Activated B cell treated with CpG ODN at 0.5 μM for 24 hours (primary cell): ENCODE measurements at regions of chr1 and their contacts with region 1.

Region 1: DNA sequence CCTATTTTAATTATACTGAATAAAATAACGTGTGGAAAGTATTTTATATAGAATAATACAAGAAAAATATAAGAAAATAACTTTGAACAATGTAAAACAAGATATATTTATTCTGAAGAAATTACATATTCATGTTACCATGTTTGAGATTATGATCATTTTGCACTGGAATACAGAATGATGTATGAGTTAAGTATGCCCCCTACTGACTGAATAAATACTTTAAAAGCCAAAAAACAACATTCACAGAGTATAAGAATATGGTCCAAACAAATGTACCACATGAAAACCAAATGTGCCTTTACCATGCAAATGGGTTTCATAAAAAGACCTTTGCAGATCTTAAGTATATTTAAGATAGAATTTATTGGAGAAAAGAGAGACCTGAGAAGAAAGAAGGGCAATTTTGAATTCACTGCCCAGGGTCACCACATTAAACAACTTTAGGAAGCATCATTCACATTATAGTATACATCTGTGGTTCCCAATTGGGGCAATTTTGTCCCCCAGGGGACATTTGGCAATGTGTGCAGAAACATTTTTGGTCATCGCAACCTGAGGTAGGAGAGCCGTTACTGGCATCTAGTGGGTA is 136.6 kb upstream of the GFI1 start:
- DNase-seq: no peak
- ATAC-seq: no peak
- H3K4me3 Mint-ChIP-seq: no peak overlapping the region
- H3K27ac Mint-ChIP-seq: no peak overlapping the region
- H3K4me1 Mint-ChIP-seq: no peaks in the 10 kb centered on the region
- H3K27me3 Mint-ChIP-seq: no peaks in the 10 kb centered on the region
- CTCF ChIP-seq: no peak

Region 2: GRCh38 chr1:91997607-91998195 is 625.6 kb before region 1 on chr1:
- CTCF ChIA-PET with region 1: interaction called, 10 read pairs
- POLR2A ChIA-PET with region 1: no interaction called
- intact Hi-C with region 1: loop called (anchors 1 kb)
- DNase-seq: no peak
- ATAC-seq: no peak
- H3K4me3 Mint-ChIP-seq: no peak overlapping the region
- H3K27ac Mint-ChIP-seq: no peak overlapping the region
- H3K4me1 Mint-ChIP-seq: no peaks in the 10 kb centered on the region
- H3K27me3 Mint-ChIP-seq: no peaks in the 10 kb centered on the region
- CTCF ChIP-seq: no peak

Region 3: GRCh38 chr1:92310185-92310597 is 313.1 kb before region 1 on chr1:
- CTCF ChIA-PET with region 1: interaction called, 13 read pairs
- POLR2A ChIA-PET with region 1: no interaction called
- intact Hi-C with region 1: loop called (anchors 1 kb)
- DNase-seq: no peak
- ATAC-seq: peak; percentile 37
- H3K4me3 Mint-ChIP-seq: no peak overlapping the region
- H3K27ac Mint-ChIP-seq: no peak overlapping the region
- H3K4me1 Mint-ChIP-seq: no peaks in the 10 kb centered on the region
- H3K27me3 Mint-ChIP-seq: no peaks in the 10 kb centered on the region
- CTCF ChIP-seq: no peak